GM12878 (cell line): ENCODE measurements at regions of chr3 and their contacts with region 1.

Region 1: GRCh38 chr3:160707187-160707794 is 30.3 kb downstream of the ARL14 start:
- DNase-seq: peak; percentile 11
- ATAC-seq: peak; percentile 83
- H3K4me3 ChIP-seq: no peak overlapping the region
- H3K27ac ChIP-seq: no peak overlapping the region
- H3K4me1 ChIP-seq: no peaks in the 10 kb centered on the region
- H3K27me3 ChIP-seq: peaks cover 3 to 5% of the 10 kb centered on the region in 2 experiments; a peak in 2 of 4 replicates
- CTCF ChIP-seq: peak; percentile 42 to 68 (median 46); a peak in 5 of 6 replicates
- EP300 ChIP-seq: no peak
- POLR2A ChIP-seq: no peak
- RAD21 ChIP-seq: peak; percentile 78

Region 2: GRCh38 chr3:160735826-160736225 is 28.5 kb after region 1 on chr3:
- CTCF ChIA-PET with region 1: no interaction called
- POLR2A ChIA-PET with region 1: no interaction called
- RAD21 ChIA-PET with region 1: no interaction called
- SMC1A ChIA-PET with region 1: no interaction called
- in situ Hi-C with region 1: no loop called
- intact Hi-C with region 1: no loop called
- DNase-seq: no peak
- ATAC-seq: no peak
- H3K4me3 ChIP-seq: no peak overlapping the region
- H3K27ac ChIP-seq: no peak overlapping the region
- H3K4me1 ChIP-seq: no peaks in the 10 kb centered on the region
- H3K27me3 ChIP-seq: peaks cover 0 to 3% of the 10 kb centered on the region in 2 experiments; a peak in 2 of 4 replicates
- CTCF ChIP-seq: no peak
- EP300 ChIP-seq: no peak
- POLR2A ChIP-seq: no peak
- RAD21 ChIP-seq: no peak

Region 3: GRCh38 chr3:160929595-160929994 is 222.3 kb after region 1 on chr3:
- CTCF ChIA-PET with region 1: interaction called, 5 read pairs
- POLR2A ChIA-PET with region 1: no interaction called
- RAD21 ChIA-PET with region 1: interaction called, 3 read pairs
- SMC1A ChIA-PET with region 1: no interaction called
- in situ Hi-C with region 1: no loop called
- intact Hi-C with region 1: loop called (anchors 5 kb)
- DNase-seq: no peak
- ATAC-seq: no peak
- H3K4me3 ChIP-seq: no peak overlapping the region
- H3K27ac ChIP-seq: no peak overlapping the region
- H3K4me1 ChIP-seq: no peaks in the 10 kb centered on the region
- H3K27me3 ChIP-seq: peaks cover 0 to 2% of the 10 kb centered on the region in 2 experiments; a peak in 2 of 4 replicates
- CTCF ChIP-seq: no peak
- EP300 ChIP-seq: no peak
- POLR2A ChIP-seq: no peak
- RAD21 ChIP-seq: no peak

Region 4: DNA sequence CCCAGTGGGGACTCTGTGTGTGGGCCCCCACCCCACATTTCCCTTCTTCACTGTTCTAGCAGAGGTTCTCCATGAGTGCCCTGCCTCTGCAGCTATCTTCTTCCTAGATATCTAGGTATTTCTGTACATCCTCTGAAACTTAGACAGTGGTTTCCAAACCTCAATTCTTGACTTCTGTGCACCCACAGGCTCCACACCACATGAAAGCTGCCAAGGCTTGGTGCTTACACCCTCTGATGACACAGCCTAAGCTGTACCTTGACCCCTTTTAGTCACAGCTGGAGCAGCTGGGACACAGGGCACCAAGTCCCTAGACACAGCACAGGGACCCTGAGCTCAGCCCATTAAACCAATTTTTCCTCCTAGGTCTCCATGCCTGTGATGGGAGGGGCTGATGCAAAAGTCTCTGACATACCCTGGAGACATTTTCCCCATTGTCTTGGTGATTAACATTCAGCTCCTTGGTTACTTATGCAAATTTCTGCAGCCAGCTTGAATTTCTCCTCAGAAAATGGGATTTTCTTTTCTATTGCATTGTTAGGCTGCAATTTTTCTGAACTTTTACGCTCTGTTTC is 1093.8 kb after region 1 on chr3:
- CTCF ChIA-PET with region 1: no interaction called
- POLR2A ChIA-PET with region 1: no interaction called
- RAD21 ChIA-PET with region 1: no interaction called
- SMC1A ChIA-PET with region 1: no interaction called
- in situ Hi-C with region 1: no loop called
- intact Hi-C with region 1: no loop called
- DNase-seq: peak; percentile 8
- ATAC-seq: peak; percentile 77
- H3K4me3 ChIP-seq: no peak overlapping the region
- H3K27ac ChIP-seq: no peak overlapping the region
- H3K4me1 ChIP-seq: no peaks in the 10 kb centered on the region
- H3K27me3 ChIP-seq: no peaks in the 10 kb centered on the region
- CTCF ChIP-seq: no peak
- EP300 ChIP-seq: no peak
- POLR2A ChIP-seq: no peak
- RAD21 ChIP-seq: no peak